ENCODE measurements at regions of chr21 and their contacts with region 1.

Region 1: DNA sequence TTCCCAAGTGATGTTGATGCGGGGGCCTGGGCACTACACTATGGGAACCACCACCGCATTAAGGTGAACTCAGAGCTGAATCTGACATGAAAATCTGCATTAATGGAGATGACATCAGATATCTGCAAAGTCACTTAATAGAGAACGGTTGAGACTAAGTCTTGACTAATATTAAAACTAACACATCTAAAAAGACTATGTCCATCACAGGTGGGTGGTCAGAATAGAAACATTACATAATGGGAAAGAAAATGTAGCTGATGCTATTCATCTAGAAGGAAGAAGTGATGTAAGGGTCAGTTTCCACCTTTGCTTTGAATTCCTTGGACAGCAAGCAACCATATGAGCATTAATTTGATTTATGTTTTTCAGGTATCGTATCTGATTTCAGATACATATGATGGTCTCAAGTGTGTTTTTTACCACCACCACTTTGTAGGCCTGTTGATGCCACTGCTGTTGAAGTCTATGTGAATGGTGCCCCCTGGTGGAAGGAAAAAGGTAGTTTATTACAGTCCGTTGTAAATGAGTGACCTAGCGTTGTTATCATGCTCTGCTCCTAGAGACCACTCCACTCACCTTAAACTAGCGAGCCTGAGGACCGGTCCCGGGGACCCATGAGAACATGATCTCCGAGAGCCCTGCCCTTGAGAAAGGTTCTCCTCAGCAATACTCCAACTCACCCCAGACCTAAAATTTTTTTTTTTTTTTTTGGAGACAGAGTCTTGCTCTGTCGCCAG is 73.5 kb downstream of the BACH1 start:
- DNase-seq: peak; percentile 66
- ATAC-seq: peak; percentile 66
- H3K4me3 Mint-ChIP-seq: no peak overlapping the region
- H3K27ac Mint-ChIP-seq: peak overlapping the region; percentile 41
- H3K4me1 Mint-ChIP-seq: peaks cover 24% of the 10 kb centered on the region
- H3K27me3 Mint-ChIP-seq: no peaks in the 10 kb centered on the region
- CTCF ChIP-seq: peak; percentile 76

Region 2: GRCh38 chr21:29084372-29084771 is 287.9 kb before region 1 on chr21:
- CTCF ChIA-PET with region 1: interaction called, 30 read pairs
- POLR2A ChIA-PET with region 1: no interaction called
- intact Hi-C with region 1: no loop called
- DNase-seq: no peak
- ATAC-seq: no peak
- H3K4me3 Mint-ChIP-seq: no peak overlapping the region
- H3K27ac Mint-ChIP-seq: no peak overlapping the region
- H3K4me1 Mint-ChIP-seq: peaks cover 18% of the 10 kb centered on the region
- H3K27me3 Mint-ChIP-seq: no peaks in the 10 kb centered on the region
- CTCF ChIP-seq: no peak

Region 3: GRCh38 chr21:29164325-29164942 is 207.8 kb before region 1 on chr21:
- CTCF ChIA-PET with region 1: interaction called, 11 read pairs
- POLR2A ChIA-PET with region 1: no interaction called
- intact Hi-C with region 1: no loop called
- DNase-seq: no peak
- ATAC-seq: peak; percentile 27
- H3K4me3 Mint-ChIP-seq: no peak overlapping the region
- H3K27ac Mint-ChIP-seq: no peak overlapping the region
- H3K4me1 Mint-ChIP-seq: peaks cover 3% of the 10 kb centered on the region
- H3K27me3 Mint-ChIP-seq: no peaks in the 10 kb centered on the region
- CTCF ChIP-seq: peak; percentile 34

Region 4: DNA sequence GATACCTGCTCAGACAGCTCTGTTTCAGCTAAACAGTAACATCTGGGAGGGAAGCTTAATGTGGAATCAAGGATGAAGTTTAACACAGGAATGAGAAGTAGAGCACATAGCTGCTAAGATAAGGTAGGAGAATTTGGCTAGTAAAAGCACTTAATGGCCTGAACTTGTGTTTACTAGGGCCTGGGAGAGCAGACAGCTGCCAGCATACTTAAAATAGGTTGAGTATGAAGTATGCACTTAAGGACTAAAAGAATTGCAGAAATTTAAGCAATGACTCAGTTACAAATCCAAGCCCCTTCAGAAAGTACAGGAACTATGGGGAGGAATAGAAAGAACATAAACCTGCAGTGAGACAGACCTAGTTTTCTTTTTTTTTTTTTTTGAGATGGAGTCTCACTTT is 20.5 kb before region 1 on chr21:
- CTCF ChIA-PET with region 1: interaction called, 16 read pairs
- POLR2A ChIA-PET with region 1: interaction called, 3 read pairs
- intact Hi-C with region 1: no loop called
- DNase-seq: no peak
- ATAC-seq: no peak
- H3K4me3 Mint-ChIP-seq: no peak overlapping the region
- H3K27ac Mint-ChIP-seq: no peak overlapping the region
- H3K4me1 Mint-ChIP-seq: peaks cover 16% of the 10 kb centered on the region
- H3K27me3 Mint-ChIP-seq: no peaks in the 10 kb centered on the region
- CTCF ChIP-seq: no peak

Region 5: DNA sequence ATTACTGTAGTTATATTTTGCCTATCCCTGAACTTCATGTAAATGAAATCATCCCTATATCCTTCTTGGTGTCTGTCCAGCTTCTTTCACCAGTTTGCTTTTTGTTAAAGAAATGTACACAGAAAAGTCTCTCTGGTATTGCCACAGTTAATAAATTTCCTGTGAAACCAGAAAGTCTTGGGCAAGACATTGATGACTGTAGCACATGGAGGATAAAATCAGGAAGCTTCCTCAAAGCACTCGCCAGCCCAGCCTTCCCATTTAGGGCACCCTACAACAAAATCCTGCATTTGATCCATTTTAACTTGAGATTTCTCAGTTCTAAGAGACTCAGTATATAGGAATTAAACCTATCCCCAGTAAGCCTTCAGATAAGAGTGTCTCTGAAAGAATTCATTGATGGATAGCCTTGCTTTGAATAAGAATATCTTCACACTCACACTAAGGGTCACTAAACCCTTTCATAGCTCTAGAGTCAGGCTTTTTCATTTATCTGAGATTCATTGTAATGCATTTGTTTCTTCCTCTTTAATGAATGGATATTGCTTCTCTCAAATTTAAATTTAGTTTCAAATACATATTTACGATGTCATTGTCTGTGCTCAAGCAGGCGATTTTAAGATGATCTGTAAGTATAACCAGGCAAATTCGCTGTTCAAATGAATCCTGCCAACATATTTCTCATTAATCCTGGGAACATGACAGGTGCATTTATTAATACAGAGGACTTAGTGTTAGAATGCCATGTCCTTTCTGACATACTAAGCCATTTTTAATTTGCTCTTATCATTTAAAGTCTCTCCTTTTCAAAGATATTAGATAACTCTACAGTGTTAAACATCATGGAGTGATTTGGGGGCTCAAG is 414.5 kb after region 1 on chr21:
- CTCF ChIA-PET with region 1: no interaction called
- POLR2A ChIA-PET with region 1: no interaction called
- intact Hi-C with region 1: no loop called
- DNase-seq: no peak
- ATAC-seq: no peak
- H3K4me3 Mint-ChIP-seq: no peak overlapping the region
- H3K27ac Mint-ChIP-seq: no peak overlapping the region
- H3K4me1 Mint-ChIP-seq: no peaks in the 10 kb centered on the region
- H3K27me3 Mint-ChIP-seq: peaks cover 2% of the 10 kb centered on the region
- CTCF ChIP-seq: no peak